H1 (cell line): ENCODE measurements at regions of chr6 and their contacts with region 1.

Region 1: GRCh38 chr6:28758046-28758817 is 165.6 kb downstream of the TRIM27 start:
- DNase-seq: peak; percentile 77 to 93
- H3K4me3 ChIP-seq: peak overlapping the region; percentile 77 to 90 (median 84)
- H3K27ac ChIP-seq: no peak overlapping the region
- H3K4me1 ChIP-seq: no peaks in the 10 kb centered on the region
- H3K27me3 ChIP-seq: peaks cover 1 to 11% (median 8%) of the 10 kb centered on the region in 4 experiments
- CTCF ChIP-seq: no peak
- EP300 ChIP-seq: no peak
- POLR2A ChIP-seq: peak in 1 of 2 experiments; percentile 37; a peak in 1 of 3 replicates
- RAD21 ChIP-seq: no peak; a peak in 1 of 4 replicates

Region 2: GRCh38 chr6:28747631-28748157 is 10.5 kb before region 1 on chr6:
- CTCF ChIA-PET with region 1: interaction called, 3 read pairs
- POLR2A ChIA-PET with region 1: interaction called, 12 read pairs
- DNase-seq: peak; percentile 86 to 90
- H3K4me3 ChIP-seq: peak overlapping the region; percentile 68 to 79 (median 74)
- H3K27ac ChIP-seq: no peak overlapping the region
- H3K4me1 ChIP-seq: peaks cover 0 to 2% (median 0%) of the 10 kb centered on the region in 4 experiments; a peak in 2 of 7 replicates
- H3K27me3 ChIP-seq: peaks cover 0 to 17% (median 7%) of the 10 kb centered on the region in 4 experiments; a peak in 4 of 7 replicates
- CTCF ChIP-seq: no peak
- EP300 ChIP-seq: no peak
- POLR2A ChIP-seq: no peak
- RAD21 ChIP-seq: no peak

Region 3: DNA sequence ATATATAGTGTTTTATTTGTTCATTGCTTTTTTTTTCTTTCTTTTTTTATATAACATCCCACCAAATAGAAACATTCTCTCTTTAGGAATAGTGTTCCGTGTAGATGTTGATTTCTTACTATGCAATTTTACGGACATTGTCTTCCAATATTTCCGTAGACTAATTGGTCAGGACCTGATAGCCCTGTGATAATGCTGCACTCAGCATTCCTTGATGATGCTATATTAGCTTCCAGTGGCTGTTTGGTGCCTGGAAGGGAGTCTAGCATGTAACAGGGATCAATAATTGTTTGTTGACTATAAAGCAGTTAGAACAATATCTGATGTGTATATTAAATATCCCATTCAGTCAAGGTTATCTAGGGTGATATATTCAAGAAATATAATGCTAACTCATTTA is 293.4 kb after region 1 on chr6:
- CTCF ChIA-PET with region 1: no interaction called
- POLR2A ChIA-PET with region 1: no interaction called
- DNase-seq: no peak
- H3K4me3 ChIP-seq: no peak overlapping the region
- H3K27ac ChIP-seq: no peak overlapping the region
- H3K4me1 ChIP-seq: no peaks in the 10 kb centered on the region
- H3K27me3 ChIP-seq: no peaks in the 10 kb centered on the region
- CTCF ChIP-seq: no peak
- EP300 ChIP-seq: no peak
- POLR2A ChIP-seq: no peak
- RAD21 ChIP-seq: no peak